CD8-positive, alpha-beta T cell (primary cell): ENCODE measurements at regions of chr2 and their contacts with region 1.

Region 1: DNA sequence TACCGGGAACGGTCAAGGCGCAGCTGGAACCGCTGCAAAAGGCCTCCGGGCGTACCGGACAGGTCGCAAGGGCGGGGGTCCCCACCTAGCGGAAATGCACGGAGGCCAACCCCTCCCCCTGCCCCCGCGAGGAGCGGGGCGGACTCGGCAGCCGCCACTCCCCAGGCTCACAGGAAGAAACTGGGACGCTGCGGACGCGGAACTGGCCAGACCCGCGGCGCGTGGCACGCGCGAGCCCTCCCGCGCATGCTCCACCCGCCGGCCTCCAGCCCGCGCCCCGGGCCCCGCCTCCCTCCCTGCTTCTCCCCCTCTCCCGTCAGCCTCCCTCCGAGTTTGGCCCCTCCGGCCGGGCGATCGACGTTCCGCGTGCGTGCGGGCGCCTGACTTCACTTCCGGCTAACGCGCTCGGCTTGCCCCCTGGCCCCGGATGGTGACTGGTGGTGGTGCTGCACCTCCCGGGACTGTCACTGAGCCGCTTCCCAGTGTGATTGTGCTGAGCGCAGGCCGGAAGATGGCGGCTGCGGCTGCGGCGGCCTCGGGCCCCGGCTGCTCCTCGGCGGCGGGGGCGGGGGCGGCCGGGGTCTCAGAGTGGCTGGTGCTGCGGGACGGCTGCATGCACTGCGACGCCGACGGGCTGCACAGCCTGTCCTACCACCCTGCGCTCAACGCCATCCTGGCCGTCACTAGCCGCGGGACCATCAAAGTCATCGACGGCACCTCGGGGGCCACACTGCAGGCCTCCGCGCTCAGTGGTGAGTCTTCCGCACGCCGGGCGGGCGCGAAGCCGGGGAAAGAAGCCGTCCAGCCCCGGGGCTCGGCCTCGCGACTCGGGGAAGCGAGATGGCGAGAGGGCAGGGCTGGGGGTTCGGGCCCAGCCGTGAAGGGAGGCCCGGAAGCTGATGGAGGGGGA is at the start of gene BIRC6:
- DNase-seq: peak; percentile 74 to 96 (median 91)
- ATAC-seq: peak; percentile 84
- H3K4me3 ChIP-seq: peak within 1 kb of the TSS; percentile 75 to 91
- H3K4me3 Mint-ChIP-seq: peak within 1 kb of the TSS; percentile 95
- H3K27ac ChIP-seq: peak within 1 kb of the TSS; percentile 86 to 91
- H3K27ac Mint-ChIP-seq: peak within 1 kb of the TSS; percentile 95
- H3K4me1 ChIP-seq: peaks cover 39% of the 10 kb centered on the region
- H3K4me1 Mint-ChIP-seq: peaks cover 40% of the 10 kb centered on the region
- H3K27me3 ChIP-seq: no peaks in the 10 kb centered on the region
- H3K27me3 Mint-ChIP-seq: no peaks in the 10 kb centered on the region
- CTCF ChIP-seq: no peak
- total RNA-seq, gene BIRC6: 107 to 109 TPM

Region 2: DNA sequence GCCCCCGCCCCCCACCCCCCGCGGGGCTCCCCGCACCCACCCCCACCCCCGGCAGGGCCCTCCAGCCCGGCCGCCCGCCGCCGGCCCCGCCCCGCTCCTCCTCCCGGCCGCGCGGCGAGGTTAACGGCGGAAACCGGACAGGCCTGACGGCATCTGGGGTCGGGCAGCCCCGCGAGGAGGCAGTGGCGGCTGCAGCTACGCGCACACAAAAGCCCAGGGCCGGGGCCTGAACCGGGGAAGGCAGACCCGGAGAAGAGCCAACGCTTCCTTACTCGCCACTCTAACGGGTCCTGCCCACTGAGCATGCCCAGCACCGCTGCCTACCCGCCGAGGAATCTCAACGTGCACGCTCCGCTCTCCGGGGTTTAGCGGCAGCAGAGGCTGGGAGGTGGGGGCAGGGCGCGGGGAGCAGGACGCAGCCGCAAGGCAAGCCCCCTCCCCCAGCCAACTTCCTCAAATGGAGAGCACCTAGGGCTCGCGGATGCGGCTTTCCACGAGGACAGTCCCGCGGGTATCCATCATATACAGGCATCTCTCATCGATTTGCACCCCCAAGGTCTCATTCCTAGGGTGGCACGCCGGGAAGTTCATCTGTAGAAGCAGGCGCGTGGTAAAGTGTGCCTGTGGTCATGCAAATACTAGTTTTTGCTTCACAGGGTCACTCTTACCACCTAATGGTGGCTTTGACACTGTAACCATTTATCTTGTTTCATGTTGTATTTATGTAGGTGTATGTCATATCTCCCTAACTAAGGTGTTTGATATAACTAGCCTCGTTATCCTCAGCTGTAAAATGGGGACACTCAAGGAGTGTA is 346.1 kb before region 1 on chr2 and contains the start of gene MEMO1:
- CTCF ChIA-PET with region 1: no interaction called
- POLR2A ChIA-PET with region 1: no interaction called
- intact Hi-C with region 1: loop called in 1 of 2 experiments (anchors 10 kb)
- DNase-seq: peak; percentile 76 to 95 (median 92)
- ATAC-seq: peak; percentile 76
- H3K4me3 ChIP-seq: peak within 1 kb of the TSS; percentile 66 to 74
- H3K4me3 Mint-ChIP-seq: peak within 1 kb of the TSS; percentile 85
- H3K27ac ChIP-seq: peak within 1 kb of the TSS; percentile 44 to 79
- H3K27ac Mint-ChIP-seq: peak within 1 kb of the TSS; percentile 91
- H3K4me1 ChIP-seq: peaks cover 17% of the 10 kb centered on the region
- H3K4me1 Mint-ChIP-seq: peaks cover 38% of the 10 kb centered on the region
- H3K27me3 ChIP-seq: no peaks in the 10 kb centered on the region
- H3K27me3 Mint-ChIP-seq: no peaks in the 10 kb centered on the region
- CTCF ChIP-seq: no peak
- total RNA-seq, gene MEMO1: 32.7 to 34.5 TPM

Region 3: DNA sequence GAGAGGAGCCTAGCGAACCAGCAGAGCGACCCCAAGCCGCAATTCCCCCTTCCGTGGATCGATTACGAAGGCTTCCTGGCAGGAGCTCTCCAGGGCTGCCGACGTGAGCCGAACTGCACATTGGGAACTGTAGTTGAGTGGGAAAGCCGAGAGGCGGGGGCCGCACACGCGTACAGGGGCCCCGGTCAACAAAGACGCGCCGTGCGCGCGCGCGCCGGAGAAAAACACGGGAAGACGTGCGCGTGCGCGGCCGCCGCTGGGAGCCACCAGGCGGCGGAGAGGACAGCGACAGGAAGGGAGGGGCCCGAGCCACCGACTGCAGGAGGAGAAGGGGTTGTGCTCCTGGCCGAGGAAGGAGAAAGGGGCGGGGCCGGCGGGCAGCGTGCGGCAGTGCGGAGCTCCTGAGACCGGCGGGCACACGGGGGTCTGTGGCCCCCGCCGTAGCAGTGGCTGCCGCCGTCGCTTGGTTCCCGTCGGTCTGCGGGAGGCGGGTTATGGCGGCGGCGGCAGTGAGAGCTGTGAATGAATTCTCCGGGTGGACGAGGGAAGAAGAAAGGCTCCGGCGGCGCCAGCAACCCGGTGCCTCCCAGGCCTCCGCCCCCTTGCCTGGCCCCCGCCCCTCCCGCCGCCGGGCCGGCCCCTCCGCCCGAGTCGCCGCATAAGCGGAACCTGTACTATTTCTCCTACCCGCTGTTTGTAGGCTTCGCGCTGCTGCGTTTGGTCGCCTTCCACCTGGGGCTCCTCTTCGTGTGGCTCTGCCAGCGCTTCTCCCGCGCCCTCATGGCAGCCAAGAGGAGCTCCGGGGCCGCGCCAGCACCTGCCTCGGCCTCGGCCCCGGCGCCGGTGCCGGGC is 293.5 kb before region 1 on chr2 and contains the start of gene SPAST:
- CTCF ChIA-PET with region 1: no interaction called
- POLR2A ChIA-PET with region 1: no interaction called
- intact Hi-C with region 1: loop called in 1 of 2 experiments (anchors 2 kb)
- DNase-seq: peak; percentile 91 to 99 (median 96)
- ATAC-seq: peak; percentile 88
- H3K4me3 ChIP-seq: peak within 1 kb of the TSS; percentile 72 to 98
- H3K4me3 Mint-ChIP-seq: peak within 1 kb of the TSS; percentile 99
- H3K27ac ChIP-seq: peak within 1 kb of the TSS; percentile 76 to 81
- H3K27ac Mint-ChIP-seq: peak within 1 kb of the TSS; percentile 96
- H3K4me1 ChIP-seq: peaks cover 20% of the 10 kb centered on the region
- H3K4me1 Mint-ChIP-seq: peaks cover 36% of the 10 kb centered on the region
- H3K27me3 ChIP-seq: no peaks in the 10 kb centered on the region
- H3K27me3 Mint-ChIP-seq: no peaks in the 10 kb centered on the region
- CTCF ChIP-seq: peak; percentile 49
- total RNA-seq, gene SPAST: 7.4 to 9.4 TPM

Region 4: GRCh38 chr2:32277674-32278482 is 79.1 kb before region 1 on chr2 and contains the start of gene YIPF4:
- CTCF ChIA-PET with region 1: no interaction called
- POLR2A ChIA-PET with region 1: interaction called, 4 read pairs
- intact Hi-C with region 1: loop called (anchors 1 to 2 kb)
- DNase-seq: peak; percentile 83 to 95 (median 90)
- ATAC-seq: peak; percentile 97
- H3K4me3 ChIP-seq: peak within 1 kb of the TSS; percentile 96 to 97
- H3K4me3 Mint-ChIP-seq: peak within 1 kb of the TSS; percentile 85
- H3K27ac ChIP-seq: peak within 1 kb of the TSS; percentile 58 to 93
- H3K27ac Mint-ChIP-seq: peak within 1 kb of the TSS; percentile 95
- H3K4me1 ChIP-seq: peaks cover 34% of the 10 kb centered on the region
- H3K4me1 Mint-ChIP-seq: peaks cover 36% of the 10 kb centered on the region
- H3K27me3 ChIP-seq: no peaks in the 10 kb centered on the region
- H3K27me3 Mint-ChIP-seq: no peaks in the 10 kb centered on the region
- CTCF ChIP-seq: no peak
- total RNA-seq, gene YIPF4: 10.4 to 10.9 TPM

Region 5: GRCh38 chr2:32627814-32628579 is 271.0 kb after region 1 on chr2 and contains the start of gene TTC27:
- CTCF ChIA-PET with region 1: no interaction called
- POLR2A ChIA-PET with region 1: no interaction called
- intact Hi-C with region 1: loop called (anchors 2 to 5 kb)
- DNase-seq: peak; percentile 87 to 96 (median 95)
- ATAC-seq: peak; percentile 99
- H3K4me3 ChIP-seq: peak within 1 kb of the TSS; percentile 82 to 89
- H3K4me3 Mint-ChIP-seq: peak within 1 kb of the TSS; percentile 93
- H3K27ac ChIP-seq: peak within 1 kb of the TSS; percentile 73
- H3K27ac Mint-ChIP-seq: peak within 1 kb of the TSS; percentile 90
- H3K4me1 ChIP-seq: no peaks in the 10 kb centered on the region
- H3K4me1 Mint-ChIP-seq: peaks cover 35% of the 10 kb centered on the region
- H3K27me3 ChIP-seq: no peaks in the 10 kb centered on the region
- H3K27me3 Mint-ChIP-seq: no peaks in the 10 kb centered on the region
- CTCF ChIP-seq: no peak
- total RNA-seq, gene TTC27: 9.6 to 12.1 TPM